ENCODE measurements at regions of chr20 and their contacts with region 1.

Region 1: GRCh38 chr20:7285918-7286556 is 518.6 kb downstream of the BMP2 start:
- DNase-seq: peak; percentile 88
- H3K4me3 ChIP-seq: no peak overlapping the region
- H3K27ac ChIP-seq: no peak overlapping the region
- H3K4me1 ChIP-seq: no peaks in the 10 kb centered on the region
- H3K27me3 ChIP-seq: peaks cover 0 to 2% of the 10 kb centered on the region in 2 experiments
- CTCF ChIP-seq: peak; percentile 86
- POLR2A ChIP-seq: no peak

Region 2: GRCh38 chr20:6178537-6178936 is 1107.5 kb before region 1 on chr20:
- CTCF ChIA-PET with region 1: interaction called, 5 read pairs
- POLR2A ChIA-PET with region 1: no interaction called
- dilution Hi-C with region 1: no loop called
- intact Hi-C with region 1: loop called (anchors 2 kb)
- DNase-seq: peak; percentile 67
- H3K4me3 ChIP-seq: no peak overlapping the region
- H3K27ac ChIP-seq: no peak overlapping the region
- H3K4me1 ChIP-seq: no peaks in the 10 kb centered on the region
- H3K27me3 ChIP-seq: peaks cover 0 to 2% of the 10 kb centered on the region in 2 experiments
- CTCF ChIP-seq: peak; percentile 29 to 36
- POLR2A ChIP-seq: no peak

Region 3: DNA sequence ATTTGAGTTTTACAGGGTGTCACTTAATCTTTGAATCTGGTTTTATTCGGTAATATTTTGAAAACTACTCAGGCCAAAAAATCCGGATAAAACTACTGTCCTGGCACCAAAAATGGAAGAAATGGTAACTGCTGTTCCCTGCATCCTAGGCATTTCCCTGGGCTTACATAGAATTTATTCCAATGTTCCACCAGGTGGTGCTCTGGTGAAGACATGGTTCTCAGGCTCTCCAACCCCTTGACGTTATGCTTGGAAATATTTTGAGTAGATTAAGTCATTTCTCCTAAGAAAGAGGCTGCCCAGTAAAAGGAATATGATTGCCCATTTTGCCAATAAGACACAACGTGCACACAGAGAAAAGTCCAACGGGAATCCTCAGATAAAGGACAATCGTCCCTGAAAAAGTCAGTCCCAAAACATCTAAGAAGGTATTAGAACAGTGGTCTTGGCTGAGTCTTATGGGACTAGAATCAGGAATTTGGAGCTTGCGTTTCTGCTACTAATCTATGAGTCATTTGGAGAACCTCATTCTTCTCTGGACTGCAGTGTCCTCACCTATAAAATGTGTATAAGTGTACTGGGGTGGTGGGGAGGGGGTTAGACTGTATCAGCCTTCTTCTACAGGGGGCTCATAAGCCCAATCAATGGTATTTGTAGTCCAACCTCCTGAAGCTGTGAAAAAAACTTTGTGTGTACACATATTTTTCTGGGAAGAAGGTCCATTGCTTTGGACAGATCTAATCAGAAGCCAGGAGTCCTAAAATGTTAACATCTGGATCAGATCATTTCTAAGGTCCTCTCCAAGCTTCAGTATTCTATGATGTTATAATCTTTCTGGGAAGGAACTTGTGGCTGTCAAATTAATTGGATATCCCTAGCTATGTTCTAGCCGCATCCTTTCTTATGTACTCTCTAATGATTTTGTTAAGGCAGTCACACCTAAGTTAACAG is 649.6 kb before region 1 on chr20:
- CTCF ChIA-PET with region 1: interaction called, 16 read pairs
- POLR2A ChIA-PET with region 1: no interaction called
- dilution Hi-C with region 1: no loop called
- intact Hi-C with region 1: no loop called
- DNase-seq: peak; percentile 85
- H3K4me3 ChIP-seq: no peak overlapping the region
- H3K27ac ChIP-seq: no peak overlapping the region
- H3K4me1 ChIP-seq: no peaks in the 10 kb centered on the region
- H3K27me3 ChIP-seq: no peaks in the 10 kb centered on the region
- CTCF ChIP-seq: peak; percentile 52 to 62
- POLR2A ChIP-seq: no peak

Region 4: GRCh38 chr20:7113577-7114466 is 172.2 kb before region 1 on chr20:
- CTCF ChIA-PET with region 1: interaction called, 6 read pairs
- POLR2A ChIA-PET with region 1: no interaction called
- dilution Hi-C with region 1: no loop called
- intact Hi-C with region 1: loop called (anchors 5 kb)
- DNase-seq: peak; percentile 53
- H3K4me3 ChIP-seq: no peak overlapping the region
- H3K27ac ChIP-seq: no peak overlapping the region
- H3K4me1 ChIP-seq: no peaks in the 10 kb centered on the region
- H3K27me3 ChIP-seq: no peaks in the 10 kb centered on the region
- CTCF ChIP-seq: peak; percentile 53 to 68
- POLR2A ChIP-seq: no peak

Region 5: DNA sequence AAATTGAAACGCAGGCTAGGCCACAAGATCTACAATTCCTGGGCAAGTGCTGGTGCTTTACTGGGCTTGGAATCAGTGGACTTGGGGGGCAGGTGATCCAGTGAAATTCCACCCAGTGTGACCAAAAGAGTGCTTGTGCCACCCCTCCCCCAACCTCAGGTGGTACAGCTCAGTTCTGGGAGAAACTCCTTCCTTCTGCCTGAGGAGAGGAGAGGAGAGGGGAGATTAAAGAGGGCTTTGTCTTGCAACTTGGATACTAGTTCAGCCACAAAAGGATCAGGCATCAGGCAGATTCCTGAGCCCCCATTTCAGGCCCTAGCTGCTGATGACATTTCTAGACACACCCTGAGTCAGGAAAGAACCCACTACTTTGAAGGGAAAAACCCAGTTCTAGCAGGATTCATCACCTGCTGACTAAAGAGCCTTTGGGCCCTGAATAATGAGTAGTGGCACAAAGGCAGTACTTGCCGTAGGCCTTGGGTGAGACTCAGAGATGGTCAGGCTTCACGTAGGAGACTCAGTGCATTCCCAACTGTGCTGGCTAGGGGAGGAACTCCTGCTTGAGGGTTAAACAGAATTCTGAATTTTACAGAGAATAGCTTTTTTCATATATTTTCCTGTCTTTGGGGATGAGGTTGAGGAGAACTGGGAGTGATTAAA is 71.8 kb before region 1 on chr20:
- CTCF ChIA-PET with region 1: no interaction called
- POLR2A ChIA-PET with region 1: no interaction called
- dilution Hi-C with region 1: no loop called
- intact Hi-C with region 1: no loop called
- DNase-seq: no peak
- H3K4me3 ChIP-seq: no peak overlapping the region
- H3K27ac ChIP-seq: no peak overlapping the region
- H3K4me1 ChIP-seq: no peaks in the 10 kb centered on the region
- H3K27me3 ChIP-seq: no peaks in the 10 kb centered on the region
- CTCF ChIP-seq: no peak
- POLR2A ChIP-seq: no peak

Region 6: GRCh38 chr20:7237251-7237650 is 48.8 kb before region 1 on chr20:
- CTCF ChIA-PET with region 1: interaction called, 11 read pairs
- POLR2A ChIA-PET with region 1: no interaction called
- dilution Hi-C with region 1: no loop called
- intact Hi-C with region 1: no loop called
- DNase-seq: no peak
- H3K4me3 ChIP-seq: no peak overlapping the region
- H3K27ac ChIP-seq: no peak overlapping the region
- H3K4me1 ChIP-seq: no peaks in the 10 kb centered on the region
- H3K27me3 ChIP-seq: no peaks in the 10 kb centered on the region
- CTCF ChIP-seq: no peak
- POLR2A ChIP-seq: no peak

Region 7: DNA sequence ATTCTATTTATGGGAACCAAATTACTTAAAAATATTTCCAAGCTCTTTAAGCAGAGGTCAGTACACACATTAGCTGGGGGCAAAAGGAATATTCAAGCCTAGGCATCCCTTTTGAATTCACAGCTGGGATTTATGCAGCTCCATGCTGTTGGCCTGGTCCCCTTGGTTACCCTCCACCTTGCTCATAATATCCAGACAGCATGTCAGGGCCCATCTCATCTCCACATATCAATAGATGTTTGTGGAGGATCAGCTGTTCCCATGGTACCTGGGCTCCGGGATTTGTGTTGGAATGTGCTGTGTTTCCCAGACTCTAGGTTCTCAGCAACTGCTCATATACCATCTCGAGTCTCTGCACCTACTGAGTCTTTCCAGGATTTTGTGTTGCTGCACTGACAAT is 16.2 kb after region 1 on chr20:
- CTCF ChIA-PET with region 1: interaction called, 14 read pairs
- POLR2A ChIA-PET with region 1: no interaction called
- dilution Hi-C with region 1: no loop called
- intact Hi-C with region 1: no loop called
- DNase-seq: no peak
- H3K4me3 ChIP-seq: no peak overlapping the region
- H3K27ac ChIP-seq: no peak overlapping the region
- H3K4me1 ChIP-seq: no peaks in the 10 kb centered on the region
- H3K27me3 ChIP-seq: no peaks in the 10 kb centered on the region
- CTCF ChIP-seq: no peak
- POLR2A ChIP-seq: no peak

Region 8: GRCh38 chr20:7437311-7437710 is 151.3 kb after region 1 on chr20:
- CTCF ChIA-PET with region 1: no interaction called
- POLR2A ChIA-PET with region 1: no interaction called
- dilution Hi-C with region 1: no loop called
- intact Hi-C with region 1: no loop called
- DNase-seq: no peak
- H3K4me3 ChIP-seq: no peak overlapping the region
- H3K27ac ChIP-seq: no peak overlapping the region
- H3K4me1 ChIP-seq: no peaks in the 10 kb centered on the region
- H3K27me3 ChIP-seq: no peaks in the 10 kb centered on the region
- CTCF ChIP-seq: no peak
- POLR2A ChIP-seq: no peak